ENCODE measurements at regions of chr14 and their contacts with region 1.

Region 1: DNA sequence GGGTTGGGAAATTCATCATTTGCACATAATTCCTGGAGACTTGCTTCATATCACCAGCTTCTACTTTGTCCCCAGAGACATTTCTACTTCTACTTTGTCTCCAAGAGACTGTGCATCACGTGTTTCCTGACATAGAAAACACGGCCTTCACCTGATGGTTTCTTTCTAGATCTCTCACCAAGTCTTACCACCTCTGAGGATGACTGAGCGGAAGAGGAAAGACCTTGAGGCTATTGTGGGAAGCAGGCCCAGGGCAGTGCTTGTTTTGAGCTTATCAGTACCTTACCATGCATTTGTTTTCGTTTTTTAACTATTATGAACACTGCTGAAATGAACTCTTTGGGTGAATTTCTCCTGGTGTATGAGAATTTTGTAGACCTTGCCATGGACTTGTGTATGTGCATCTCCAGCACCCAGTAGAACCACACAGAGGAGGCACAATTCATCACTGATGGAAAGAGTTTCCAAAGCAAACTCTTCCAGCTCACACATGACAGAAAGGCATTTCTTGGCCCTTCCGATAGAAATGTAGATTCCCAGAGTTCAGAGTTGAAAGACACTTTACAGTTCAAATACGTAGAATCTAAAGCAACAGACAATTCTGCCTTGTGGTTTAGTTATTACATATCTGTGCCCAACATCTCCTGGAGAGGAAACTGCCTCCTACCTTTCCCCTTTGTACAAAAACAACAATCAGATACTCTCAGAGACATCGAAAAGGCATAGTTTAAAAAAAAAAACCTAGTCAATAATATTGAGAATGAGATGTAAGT is 434.7 kb downstream of the FUT8 start:
- DNase-seq: peak; percentile 82
- H3K4me3 Mint-ChIP-seq: peak overlapping the region; percentile 59
- H3K27ac Mint-ChIP-seq: peak overlapping the region; percentile 90
- H3K4me1 Mint-ChIP-seq: peaks cover 82% of the 10 kb centered on the region
- H3K27me3 Mint-ChIP-seq: no peaks in the 10 kb centered on the region

Region 2: GRCh38 chr14:65170768-65171507 is 676.3 kb before region 1 on chr14:
- intact Hi-C with region 1: loop called (anchors 2 kb)
- DNase-seq: peak; percentile 49
- H3K4me3 Mint-ChIP-seq: peak overlapping the region; percentile 73
- H3K27ac Mint-ChIP-seq: peak overlapping the region; percentile 88
- H3K4me1 Mint-ChIP-seq: peaks cover 48% of the 10 kb centered on the region
- H3K27me3 Mint-ChIP-seq: no peaks in the 10 kb centered on the region

Region 3: DNA sequence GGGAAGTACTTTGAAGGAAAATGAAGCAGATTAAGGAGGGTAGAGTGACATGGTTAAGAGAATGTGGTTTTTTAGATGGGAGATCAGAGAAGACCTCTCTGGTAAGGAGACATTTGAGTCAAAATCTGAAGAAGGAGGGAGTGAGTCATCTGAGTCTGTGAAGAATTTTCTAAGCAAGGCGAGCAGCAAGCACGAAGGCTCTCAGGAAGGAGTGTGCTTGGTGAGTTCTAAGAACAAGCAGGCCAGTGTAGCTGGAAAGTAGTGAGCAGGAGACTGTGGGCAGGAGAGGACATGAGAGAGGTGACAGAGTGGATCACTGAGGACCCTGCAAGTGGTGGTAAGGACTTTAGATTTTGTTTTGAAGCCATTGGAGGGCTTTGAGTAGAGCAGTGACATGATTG is 511.1 kb before region 1 on chr14:
- intact Hi-C with region 1: loop called (anchors 2 kb)
- DNase-seq: peak; percentile 63
- H3K4me3 Mint-ChIP-seq: peak overlapping the region; percentile 91
- H3K27ac Mint-ChIP-seq: peak overlapping the region; percentile 96
- H3K4me1 Mint-ChIP-seq: peaks cover 59% of the 10 kb centered on the region
- H3K27me3 Mint-ChIP-seq: no peaks in the 10 kb centered on the region

Region 4: GRCh38 chr14:65860956-65861611 is 13.8 kb after region 1 on chr14:
- intact Hi-C with region 1: loop called (anchors 1 kb)
- DNase-seq: peak; percentile 43
- H3K4me3 Mint-ChIP-seq: peak overlapping the region; percentile 48
- H3K27ac Mint-ChIP-seq: peak overlapping the region; percentile 74
- H3K4me1 Mint-ChIP-seq: peaks cover 63% of the 10 kb centered on the region
- H3K27me3 Mint-ChIP-seq: no peaks in the 10 kb centered on the region

Region 5: GRCh38 chr14:65915125-65915524 is 67.9 kb after region 1 on chr14:
- intact Hi-C with region 1: loop called (anchors 1 kb)
- DNase-seq: no peak
- H3K4me3 Mint-ChIP-seq: no peak overlapping the region
- H3K27ac Mint-ChIP-seq: no peak overlapping the region
- H3K4me1 Mint-ChIP-seq: peaks cover 54% of the 10 kb centered on the region
- H3K27me3 Mint-ChIP-seq: peaks cover 7% of the 10 kb centered on the region

Region 6: DNA sequence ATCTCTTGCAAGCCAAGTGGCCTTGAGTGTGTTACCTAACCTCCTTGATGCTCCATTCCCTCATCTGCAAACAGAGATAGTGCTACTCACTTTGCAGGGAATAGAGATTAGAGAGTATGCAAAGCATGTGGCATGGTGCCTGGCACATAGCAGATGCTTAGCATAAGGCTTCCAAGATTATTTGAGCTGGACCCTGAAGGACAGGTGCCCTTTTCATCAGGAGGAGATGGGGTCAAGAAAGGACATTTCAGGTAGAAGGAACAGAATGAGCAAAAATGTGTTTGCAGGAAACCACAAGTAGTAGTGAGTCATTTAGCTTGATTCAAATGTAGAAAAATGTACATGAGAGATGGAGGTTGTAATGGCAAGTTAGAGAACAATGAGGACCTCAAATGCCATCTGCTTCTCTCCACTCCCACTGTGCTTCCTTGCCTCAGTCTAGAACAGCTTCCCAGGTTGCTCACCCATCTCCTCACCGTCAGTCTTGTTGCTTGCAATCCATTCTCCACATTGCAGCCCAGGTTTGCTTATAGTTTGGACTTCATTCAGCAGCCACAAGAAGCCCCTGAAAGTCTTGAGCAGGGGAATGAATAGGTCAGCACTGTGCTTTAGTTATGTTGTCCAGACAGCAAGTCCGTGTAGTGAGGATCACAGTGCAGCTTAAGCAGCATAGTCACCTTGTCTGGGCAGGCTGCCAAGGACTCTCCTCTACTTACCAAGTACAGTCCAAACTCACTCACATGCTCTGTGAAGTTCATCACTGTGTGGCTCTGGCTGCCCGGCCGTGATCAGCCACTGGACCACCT is 102.7 kb after region 1 on chr14:
- intact Hi-C with region 1: loop called (anchors 1 kb)
- DNase-seq: no peak
- H3K4me3 Mint-ChIP-seq: peak overlapping the region; percentile 11
- H3K27ac Mint-ChIP-seq: peak overlapping the region; percentile 50
- H3K4me1 Mint-ChIP-seq: peaks cover 59% of the 10 kb centered on the region
- H3K27me3 Mint-ChIP-seq: peaks cover 11% of the 10 kb centered on the region

Region 7: GRCh38 chr14:65972891-65973290 is 125.6 kb after region 1 on chr14:
- intact Hi-C with region 1: no loop called
- DNase-seq: no peak
- H3K4me3 Mint-ChIP-seq: no peak overlapping the region
- H3K27ac Mint-ChIP-seq: no peak overlapping the region
- H3K4me1 Mint-ChIP-seq: no peaks in the 10 kb centered on the region
- H3K27me3 Mint-ChIP-seq: peaks cover 26% of the 10 kb centered on the region

Region 8: GRCh38 chr14:66022526-66022925 is 175.3 kb after region 1 on chr14:
- intact Hi-C with region 1: no loop called
- DNase-seq: no peak
- H3K4me3 Mint-ChIP-seq: no peak overlapping the region
- H3K27ac Mint-ChIP-seq: no peak overlapping the region
- H3K4me1 Mint-ChIP-seq: no peaks in the 10 kb centered on the region
- H3K27me3 Mint-ChIP-seq: peaks cover 2% of the 10 kb centered on the region

Measured in activated T-helper 1 cell treated with anti-CD3 and anti-CD28 coated beads, Interleukin-12 subunit alpha, Interleukin-12 subunit beta, Interleukin-2, Interleukin-4 antibody, amounts not matched to agents 30 ng/mL and 10 ng/mL and 1 ng/mL, durations not matched to agents 14 hours and 24 hours and 36 hours (primary cell).